Activated CD4-positive, alpha-beta T cell treated with anti-CD3 and anti-CD28 coated beads, Interleukin-2, amount 10 ng/mL, durations not matched to agents 7 days and 5 days (primary cell): ENCODE measurements at regions of chr14 and their contacts with region 1.

Region 1: GRCh38 chr14:64823305-64823861 is 56.3 kb downstream of the SPTB start:
- DNase-seq: peak; percentile 68
- H3K4me3 Mint-ChIP-seq: no peak overlapping the region
- H3K27ac Mint-ChIP-seq: no peak overlapping the region
- H3K4me1 Mint-ChIP-seq: peaks cover 3% of the 10 kb centered on the region
- H3K27me3 Mint-ChIP-seq: peaks cover 32% of the 10 kb centered on the region

Region 2: DNA sequence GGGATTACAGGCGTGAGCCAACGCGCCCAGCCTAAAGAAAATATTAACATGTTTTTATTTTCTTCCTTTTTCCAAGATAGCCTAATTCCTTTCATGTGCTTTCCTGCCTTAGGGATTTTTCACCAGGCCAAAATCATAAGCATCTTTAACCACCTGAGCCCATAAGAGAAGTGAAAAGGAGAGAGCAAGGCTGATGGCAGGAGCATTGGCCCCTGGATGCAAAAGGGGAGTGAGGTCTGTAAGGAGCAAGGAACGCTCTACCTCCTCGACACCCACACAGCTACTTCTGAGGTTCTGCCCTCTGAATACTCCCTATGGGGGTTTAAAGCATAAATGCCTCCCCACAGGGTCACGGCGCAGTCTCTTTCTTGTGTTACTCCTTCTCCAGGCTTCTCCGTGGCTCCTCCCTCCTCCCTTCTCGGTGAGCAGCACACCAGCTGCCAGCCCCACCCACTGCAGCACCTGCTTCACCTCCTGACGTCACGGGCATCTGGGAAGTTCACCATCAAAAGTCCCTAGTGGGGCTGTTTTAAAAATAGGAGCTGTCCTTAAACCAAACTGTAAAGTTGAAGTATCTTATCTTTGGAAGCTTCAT is 11.1 kb before region 1 on chr14:
- CTCF ChIA-PET with region 1: interaction called, 11 read pairs
- POLR2A ChIA-PET with region 1: interaction called, 3 read pairs
- DNase-seq: no peak
- H3K4me3 Mint-ChIP-seq: no peak overlapping the region
- H3K27ac Mint-ChIP-seq: no peak overlapping the region
- H3K4me1 Mint-ChIP-seq: peaks cover 2% of the 10 kb centered on the region
- H3K27me3 Mint-ChIP-seq: peaks cover 27% of the 10 kb centered on the region